ENCODE measurements at regions of chr19 and their contacts with region 1.

Region 1: DNA sequence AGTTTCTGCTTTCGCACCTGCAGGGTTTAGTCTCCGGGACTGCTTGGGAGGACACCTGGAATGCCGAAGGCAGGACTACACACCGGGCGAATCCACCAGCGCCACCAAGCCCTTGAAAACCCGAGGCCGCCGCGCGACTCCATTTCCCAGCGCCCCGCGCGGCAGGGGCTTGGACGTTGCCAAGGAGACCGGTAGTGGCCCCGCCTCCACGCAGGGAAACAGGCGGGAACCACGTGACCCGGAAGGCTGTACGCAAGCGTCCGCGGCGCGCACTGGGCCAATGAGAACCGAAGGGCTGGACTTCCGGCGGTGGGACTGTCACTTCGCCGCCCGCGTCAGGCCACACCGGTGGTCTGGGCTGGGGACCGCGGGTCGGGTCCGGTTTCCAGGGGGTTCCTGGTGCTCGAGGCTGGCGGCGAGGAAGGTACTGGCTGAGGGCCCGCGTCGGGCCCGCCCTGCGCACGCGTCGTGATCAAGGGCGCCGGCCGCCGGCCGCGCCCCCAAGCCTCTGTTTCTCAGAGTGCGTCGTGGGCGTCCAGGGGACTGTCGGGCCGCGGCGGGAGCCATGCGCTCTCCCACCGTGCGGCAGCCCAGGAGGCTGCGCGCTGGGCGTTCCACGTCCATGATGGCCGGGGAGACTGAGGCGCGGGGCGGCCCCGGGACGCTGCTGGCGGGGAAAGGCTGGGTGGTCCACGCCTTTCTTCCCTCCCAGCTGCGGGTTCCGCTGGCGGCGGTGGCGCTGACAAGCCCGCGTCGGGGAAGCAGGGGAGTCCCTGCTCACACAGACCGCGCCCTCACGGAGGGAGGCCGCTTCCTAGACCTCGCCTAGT is at the start of gene ZNF324:
- DNase-seq: peak; percentile 85 to 96
- H3K4me3 ChIP-seq: peak within 1 kb of the TSS; percentile 68
- H3K27ac ChIP-seq: no peak within 1 kb of the TSS
- H3K4me1 ChIP-seq: no peaks in the 10 kb centered on the region
- H3K27me3 ChIP-seq: no peaks in the 10 kb centered on the region
- CTCF ChIP-seq: no peak
- total RNA-seq, gene ZNF324: 5.9 and 8.1 TPM in 2 replicates

Region 2: DNA sequence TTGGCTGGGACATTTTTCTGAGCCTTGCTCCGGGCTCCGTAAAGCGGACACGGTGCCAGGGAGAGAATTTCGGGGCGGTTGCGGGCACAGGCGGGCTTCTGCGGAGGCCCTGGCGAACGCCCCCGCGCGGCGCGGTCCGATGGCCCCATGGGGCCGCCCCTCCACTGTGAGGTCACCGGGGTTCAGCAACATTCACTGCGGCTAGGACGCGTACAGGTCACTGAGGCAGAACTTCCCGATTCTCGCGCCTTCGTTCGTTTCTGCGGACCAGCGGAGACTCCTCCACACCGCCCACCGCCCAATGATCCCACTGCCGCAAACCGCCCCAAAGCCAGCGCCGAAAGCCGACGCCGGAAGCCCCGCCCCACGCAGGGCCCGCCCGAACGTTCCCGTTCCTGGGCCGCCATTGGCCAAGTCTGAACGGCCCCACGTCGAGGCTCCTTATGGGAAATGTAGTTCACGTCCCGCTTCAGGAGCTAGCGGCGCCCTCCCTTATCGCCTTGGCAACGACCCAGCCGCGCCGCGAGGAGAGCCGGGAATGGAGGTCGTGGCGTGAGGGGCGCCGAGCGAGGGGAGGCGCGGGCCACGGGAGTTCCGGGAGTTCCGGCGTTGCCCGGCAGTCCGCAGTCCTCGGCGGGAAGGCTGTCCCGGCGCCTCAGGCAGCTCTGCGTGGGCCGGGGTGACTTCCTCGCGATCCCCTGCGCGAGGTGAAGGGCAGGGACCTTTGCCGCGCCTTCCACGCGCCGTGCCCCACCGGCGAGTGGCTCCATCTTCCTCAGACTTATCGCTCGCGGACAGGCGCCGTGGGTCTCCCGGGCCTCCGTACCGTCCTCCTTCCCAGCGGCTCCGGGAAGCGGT is 58.6 kb before region 1 on chr19 and contains the start of gene ZNF584:
- CTCF ChIA-PET with region 1: no interaction called
- POLR2A ChIA-PET with region 1: no interaction called
- intact Hi-C with region 1: loop called (anchors 2 kb)
- DNase-seq: peak; percentile 76 to 91
- H3K4me3 ChIP-seq: peak within 1 kb of the TSS; percentile 73
- H3K27ac ChIP-seq: peak within 1 kb of the TSS; percentile 9; the same call in 1 of the 2 replicates
- H3K4me1 ChIP-seq: peaks cover 12% of the 10 kb centered on the region
- H3K27me3 ChIP-seq: no peaks in the 10 kb centered on the region
- CTCF ChIP-seq: no peak
- total RNA-seq, gene ZNF584: 13.5 and 18.8 TPM in 2 replicates

Region 3: DNA sequence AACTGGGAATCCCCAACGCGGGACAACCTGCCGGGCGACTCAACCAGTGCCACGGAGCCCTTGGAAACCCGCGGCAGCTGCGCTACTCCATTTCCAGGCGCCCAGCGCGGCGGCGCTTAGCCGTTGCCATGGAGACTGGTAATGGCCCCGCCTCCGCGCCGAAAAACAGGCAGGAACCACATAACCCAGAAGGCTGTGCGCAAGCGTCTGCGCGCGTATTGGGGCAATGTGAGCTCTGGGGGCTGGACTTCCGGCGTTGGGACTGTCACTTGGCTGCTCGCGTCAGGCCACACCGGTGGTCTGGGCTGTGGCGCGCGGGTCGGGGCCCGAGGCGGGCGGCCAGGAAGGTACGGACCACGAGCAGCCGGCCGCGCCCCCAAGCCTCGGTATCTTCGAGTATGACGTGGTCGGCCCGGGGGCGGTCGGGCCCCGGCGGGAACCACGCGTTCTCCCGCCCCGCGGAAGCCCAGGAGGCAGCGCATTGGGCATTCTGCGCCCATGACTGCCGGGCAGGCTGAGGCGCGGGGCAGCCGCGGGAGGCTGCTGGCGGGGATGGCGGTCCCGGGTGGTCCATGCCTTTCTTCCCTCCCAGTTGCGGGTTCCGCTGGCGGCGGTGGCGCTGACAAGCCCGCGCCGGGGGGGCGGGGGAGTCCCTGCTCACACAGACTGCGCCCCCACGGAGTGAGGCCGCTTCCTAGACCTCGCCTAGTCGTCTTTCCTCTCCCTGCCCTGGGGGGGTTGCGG is 15.4 kb before region 1 on chr19 and contains the start of gene ZNF324B:
- CTCF ChIA-PET with region 1: no interaction called
- POLR2A ChIA-PET with region 1: interaction called, 10 read pairs
- intact Hi-C with region 1: no loop called
- DNase-seq: peak; percentile 86 to 93
- H3K4me3 ChIP-seq: peak within 1 kb of the TSS; percentile 81
- H3K27ac ChIP-seq: no peak within 1 kb of the TSS
- H3K4me1 ChIP-seq: 0 out of 2 replicates have a peak, but pooled peaks cover 5% of the 10 kb centered on the region
- H3K27me3 ChIP-seq: peaks cover 6% of the 10 kb centered on the region; the same call in 1 of the 2 replicates
- CTCF ChIP-seq: no peak
- total RNA-seq, gene ZNF324B: 4.3 and 6.1 TPM in 2 replicates

Region 4: GRCh38 chr19:58499021-58499927 is 32.3 kb after region 1 on chr19:
- CTCF ChIA-PET with region 1: no interaction called
- POLR2A ChIA-PET with region 1: no interaction called
- intact Hi-C with region 1: no loop called
- DNase-seq: peak; percentile 92 to 97
- H3K4me3 ChIP-seq: peak overlapping the region; percentile 88
- H3K27ac ChIP-seq: no peak overlapping the region
- H3K4me1 ChIP-seq: no peaks in the 10 kb centered on the region
- H3K27me3 ChIP-seq: no peaks in the 10 kb centered on the region
- CTCF ChIP-seq: no peak